ENCODE measurements at regions of chr5 and their contacts with region 1.

Region 1: GRCh38 chr5:166581826-166582225 is 1709.6 kb upstream of the WWC1 start:
- DNase-seq: no peak
- ATAC-seq: no peak

Region 2: DNA sequence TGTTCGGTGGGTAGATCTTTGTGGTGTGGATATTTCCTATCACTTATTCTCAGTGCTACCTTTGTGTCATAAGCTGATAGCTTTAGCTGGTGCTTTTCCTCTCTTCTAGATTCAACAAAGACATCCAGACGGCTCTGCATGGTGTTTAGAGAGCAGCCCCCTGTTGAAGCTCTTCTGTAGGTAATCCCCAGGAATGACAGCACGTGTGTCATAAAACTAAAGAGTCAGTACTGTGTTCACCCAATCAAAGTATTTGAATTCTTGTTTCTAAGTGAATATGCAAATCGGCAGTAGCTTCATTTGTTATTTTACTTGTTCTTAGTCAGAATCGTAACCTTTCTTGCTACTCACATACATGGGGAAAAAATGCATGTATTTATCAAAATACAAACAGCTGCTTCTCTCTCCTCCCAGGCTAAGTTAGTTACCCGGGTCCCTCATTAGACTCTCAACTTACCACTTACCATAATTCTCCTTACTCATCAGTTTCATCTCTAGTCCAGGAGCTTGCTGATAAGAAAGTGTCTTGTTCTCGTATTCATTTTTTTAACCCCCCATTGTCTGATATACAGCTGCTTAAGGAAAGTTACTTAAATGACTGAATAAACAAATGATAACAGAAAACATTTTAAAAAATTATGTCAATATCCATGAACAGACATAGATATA is 13.6 kb after region 1 on chr5:
- intact Hi-C with region 1: loop called (anchors 1 kb)
- DNase-seq: no peak
- ATAC-seq: no peak

Region 3: DNA sequence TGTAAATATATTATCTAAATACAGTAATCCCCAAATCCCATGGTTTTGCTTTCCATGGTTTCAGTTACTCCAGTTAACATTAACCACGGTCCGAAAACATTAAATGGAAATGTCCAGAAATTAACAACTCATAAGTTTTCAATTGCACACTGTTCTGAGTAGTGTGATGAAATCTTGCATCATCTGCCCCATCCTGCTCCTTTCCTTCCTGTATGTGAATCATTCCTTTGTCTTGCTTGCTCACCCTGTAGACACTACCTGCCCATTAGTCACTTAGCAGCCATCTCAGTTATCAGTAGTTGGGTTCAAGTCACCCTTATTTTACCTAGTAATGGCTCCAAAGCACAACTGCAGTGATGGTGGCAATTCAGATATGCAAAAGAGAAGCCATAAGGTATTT is 141.1 kb after region 1 on chr5:
- intact Hi-C with region 1: no loop called
- DNase-seq: no peak
- ATAC-seq: no peak